CD4-positive, alpha-beta memory T cell (primary cell): ENCODE measurements at regions of chr1 and their contacts with region 1.

Region 1: DNA sequence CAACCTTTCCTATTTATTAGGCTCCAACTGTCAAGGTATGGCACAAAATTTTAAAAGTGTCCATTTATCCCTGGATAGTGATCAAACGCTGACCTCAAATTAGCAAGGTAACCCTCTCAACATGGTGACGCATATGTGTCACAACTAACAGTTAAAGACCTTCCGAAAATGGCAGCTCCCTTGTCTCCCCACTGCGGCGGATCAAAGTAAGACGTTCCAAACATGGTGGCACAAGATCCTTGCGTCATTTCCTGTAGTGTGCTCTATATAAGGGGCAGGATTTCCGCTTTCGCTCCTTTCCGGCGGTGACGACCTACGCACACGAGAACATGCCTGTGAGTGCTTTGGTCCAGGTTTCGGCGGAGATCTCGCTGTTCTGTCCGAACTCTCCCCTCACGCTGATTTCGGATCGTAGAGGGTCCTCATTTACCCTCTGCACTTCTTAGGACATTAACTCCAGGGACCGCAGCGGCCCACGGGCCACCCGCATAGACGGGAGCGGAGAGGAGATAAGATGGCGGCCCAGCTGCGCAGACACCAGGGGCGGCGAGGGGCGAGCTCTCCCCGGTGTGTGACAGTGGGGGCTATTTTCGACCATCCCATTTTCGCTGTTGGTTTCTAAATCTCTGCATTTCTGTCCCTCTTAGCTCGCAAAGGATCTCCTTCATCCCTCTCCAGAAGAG is at the start of gene RPS27:
- DNase-seq: peak; percentile 93 to 97 (median 95)
- H3K4me3 ChIP-seq: peak within 1 kb of the TSS; percentile 87 to 92
- H3K4me3 Mint-ChIP-seq: peak within 1 kb of the TSS; percentile 94 to 99 (median 98)
- H3K27ac ChIP-seq: peak within 1 kb of the TSS; percentile 93
- H3K27ac Mint-ChIP-seq: peak within 1 kb of the TSS; percentile 93 to 100 (median 100)
- H3K4me1 ChIP-seq: peaks cover 37% of the 10 kb centered on the region
- H3K4me1 Mint-ChIP-seq: peaks cover 22 to 42% (median 34%) of the 10 kb centered on the region in 4 donors
- H3K27me3 ChIP-seq: no peaks in the 10 kb centered on the region
- H3K27me3 Mint-ChIP-seq: peaks cover 2 to 3% of the 10 kb centered on the region in 2 donors
- total RNA-seq, gene RPS27: 6,785 to 7,292 TPM

Region 2: GRCh38 chr1:153546796-153547568 is 443.6 kb before region 1 on chr1:
- CTCF ChIA-PET with region 1: no interaction called
- POLR2A ChIA-PET with region 1: no interaction called
- intact Hi-C with region 1: no loop called
- DNase-seq: no peak
- H3K4me3 ChIP-seq: peak overlapping the region in 1 of 2 donors; percentile 79
- H3K4me3 Mint-ChIP-seq: peak overlapping the region in 7 of 8 donors; percentile 48 to 99 (median 96)
- H3K27ac ChIP-seq: peak overlapping the region; percentile 74
- H3K27ac Mint-ChIP-seq: peak overlapping the region; percentile 93 to 98 (median 97)
- H3K4me1 ChIP-seq: peaks cover 54% of the 10 kb centered on the region
- H3K4me1 Mint-ChIP-seq: peaks cover 34 to 69% (median 54%) of the 10 kb centered on the region in 4 donors
- H3K27me3 ChIP-seq: no peaks in the 10 kb centered on the region
- H3K27me3 Mint-ChIP-seq: no peaks in the 10 kb centered on the region

Region 3: GRCh38 chr1:153670859-153671627 is 319.6 kb before region 1 on chr1 and contains the start of gene ILF2:
- CTCF ChIA-PET with region 1: interaction called, 3 read pairs
- POLR2A ChIA-PET with region 1: interaction called, 10 read pairs
- intact Hi-C with region 1: loop called (anchors 1 kb)
- DNase-seq: peak; percentile 96 to 100 (median 99)
- H3K4me3 ChIP-seq: peak within 1 kb of the TSS; percentile 72 to 98
- H3K4me3 Mint-ChIP-seq: no peak within 1 kb of the TSS
- H3K27ac ChIP-seq: peak within 1 kb of the TSS; percentile 90
- H3K27ac Mint-ChIP-seq: peak within 1 kb of the TSS in 2 of 7 donors; percentile 68 to 77
- H3K4me1 ChIP-seq: peaks cover 26% of the 10 kb centered on the region
- H3K4me1 Mint-ChIP-seq: peaks cover 11 to 16% (median 13%) of the 10 kb centered on the region in 4 donors
- H3K27me3 ChIP-seq: no peaks in the 10 kb centered on the region
- H3K27me3 Mint-ChIP-seq: no peaks in the 10 kb centered on the region
- total RNA-seq, gene ILF2: 82.3 to 87.8 TPM

Region 4: GRCh38 chr1:153783233-153784190 is 207.1 kb before region 1 on chr1:
- CTCF ChIA-PET with region 1: interaction called, 4 read pairs
- POLR2A ChIA-PET with region 1: interaction called, 17 read pairs
- intact Hi-C with region 1: no loop called
- DNase-seq: peak; percentile 89 to 94 (median 92)
- H3K4me3 ChIP-seq: peak overlapping the region; percentile 55 to 73
- H3K4me3 Mint-ChIP-seq: peak overlapping the region; percentile 88 to 97 (median 92)
- H3K27ac ChIP-seq: peak overlapping the region; percentile 84
- H3K27ac Mint-ChIP-seq: peak overlapping the region; percentile 89 to 99 (median 98)
- H3K4me1 ChIP-seq: peaks cover 6% of the 10 kb centered on the region
- H3K4me1 Mint-ChIP-seq: peaks cover 4 to 12% (median 11%) of the 10 kb centered on the region in 4 donors
- H3K27me3 ChIP-seq: no peaks in the 10 kb centered on the region
- H3K27me3 Mint-ChIP-seq: peaks cover 0 to 2% of the 10 kb centered on the region in 2 donors

Region 5: GRCh38 chr1:153827168-153827964 is 163.2 kb before region 1 on chr1:
- CTCF ChIA-PET with region 1: interaction called, 12 read pairs
- POLR2A ChIA-PET with region 1: interaction called, 5 read pairs
- intact Hi-C with region 1: no loop called
- DNase-seq: no peak
- H3K4me3 ChIP-seq: no peak overlapping the region
- H3K4me3 Mint-ChIP-seq: no peak overlapping the region
- H3K27ac ChIP-seq: no peak overlapping the region
- H3K27ac Mint-ChIP-seq: peak overlapping the region in 1 of 7 donors; percentile 41
- H3K4me1 ChIP-seq: no peaks in the 10 kb centered on the region
- H3K4me1 Mint-ChIP-seq: peaks cover 0 to 6% (median 0%) of the 10 kb centered on the region in 4 donors
- H3K27me3 ChIP-seq: no peaks in the 10 kb centered on the region
- H3K27me3 Mint-ChIP-seq: no peaks in the 10 kb centered on the region

Region 6: DNA sequence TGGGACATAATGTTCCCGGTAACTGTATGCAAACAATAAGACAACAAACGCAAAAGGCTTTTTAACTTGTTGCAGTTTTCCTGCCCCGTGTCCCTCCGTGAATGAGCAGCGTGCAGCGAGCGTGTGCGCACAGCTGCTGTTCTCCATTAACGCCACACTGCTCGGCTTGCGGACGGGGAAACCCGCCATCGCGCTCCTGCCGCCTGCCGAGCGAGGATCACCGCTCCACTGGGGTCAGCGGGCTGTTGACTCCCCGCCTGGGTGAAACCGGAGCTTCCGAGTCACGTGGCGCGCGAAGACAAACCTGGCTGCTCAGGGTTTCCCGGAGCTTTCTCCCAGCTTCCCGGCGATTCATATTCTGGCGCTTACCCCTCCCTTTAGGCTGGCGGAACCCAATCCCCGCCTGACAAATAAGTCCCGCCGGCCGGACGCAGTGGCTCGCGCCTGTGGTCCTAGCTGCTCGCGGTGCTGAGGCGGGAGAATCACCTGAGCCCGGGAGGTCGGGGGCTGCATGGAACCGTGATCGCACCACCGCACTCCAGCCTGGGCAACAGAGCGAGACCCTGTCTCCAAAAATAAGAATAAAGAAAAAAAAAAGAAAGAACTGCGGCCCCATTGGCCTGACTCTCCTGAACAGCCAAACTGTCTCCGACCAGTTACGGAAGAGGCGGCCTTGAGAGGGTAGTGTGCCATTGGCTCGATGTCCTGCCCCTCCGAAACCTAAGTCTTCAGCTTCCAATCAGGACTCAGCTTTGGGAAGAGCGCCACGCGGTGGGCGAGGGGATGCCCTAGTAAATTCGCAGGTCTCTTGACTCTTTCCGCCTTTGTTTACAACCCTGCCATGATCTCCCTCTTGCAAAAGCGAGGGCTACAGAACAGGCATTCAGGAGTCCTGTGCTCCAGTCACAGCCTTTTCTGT is 23.3 kb before region 1 on chr1 and contains the start of gene CREB3L4:
- CTCF ChIA-PET with region 1: interaction called, 70 read pairs
- POLR2A ChIA-PET with region 1: interaction called, 164 read pairs
- intact Hi-C with region 1: no loop called
- DNase-seq: peak; percentile 82 to 91 (median 87)
- H3K4me3 ChIP-seq: peak within 1 kb of the TSS; percentile 45 to 66
- H3K4me3 Mint-ChIP-seq: peak within 1 kb of the TSS; percentile 86 to 97 (median 92)
- H3K27ac ChIP-seq: peak within 1 kb of the TSS; percentile 89
- H3K27ac Mint-ChIP-seq: peak within 1 kb of the TSS; percentile 95 to 99 (median 96)
- H3K4me1 ChIP-seq: peaks cover 46% of the 10 kb centered on the region
- H3K4me1 Mint-ChIP-seq: peaks cover 29 to 60% (median 47%) of the 10 kb centered on the region in 4 donors
- H3K27me3 ChIP-seq: no peaks in the 10 kb centered on the region
- H3K27me3 Mint-ChIP-seq: no peaks in the 10 kb centered on the region
- total RNA-seq, gene CREB3L4: 7.4 to 9.8 TPM

Region 7: GRCh38 chr1:154220071-154220969 is 229.7 kb after region 1 on chr1 and contains the start of gene UBAP2L:
- CTCF ChIA-PET with region 1: no interaction called
- POLR2A ChIA-PET with region 1: interaction called, 19 read pairs
- intact Hi-C with region 1: loop called (anchors 1 kb)
- DNase-seq: peak; percentile 97 to 99 (median 99)
- H3K4me3 ChIP-seq: peak within 1 kb of the TSS; percentile 93 to 99
- H3K4me3 Mint-ChIP-seq: peak within 1 kb of the TSS; percentile 92 to 100 (median 97)
- H3K27ac ChIP-seq: peak within 1 kb of the TSS; percentile 97
- H3K27ac Mint-ChIP-seq: peak within 1 kb of the TSS; percentile 96 to 99 (median 99)
- H3K4me1 ChIP-seq: peaks cover 66% of the 10 kb centered on the region
- H3K4me1 Mint-ChIP-seq: peaks cover 52 to 78% (median 65%) of the 10 kb centered on the region in 4 donors
- H3K27me3 ChIP-seq: no peaks in the 10 kb centered on the region
- H3K27me3 Mint-ChIP-seq: no peaks in the 10 kb centered on the region
- total RNA-seq, gene UBAP2L: 180 to 189 TPM